ENCODE measurements at regions of chr17 and their contacts with region 1.

Region 1: GRCh38 chr17:31321481-31321880 is at the start of gene EVI2A:
- DNase-seq: peak; percentile 69
- ATAC-seq: peak; percentile 74
- H3K4me3 ChIP-seq: peak within 1 kb of the TSS; percentile 65
- H3K27ac ChIP-seq: peak within 1 kb of the TSS; percentile 95
- H3K4me1 ChIP-seq: peaks cover 4% of the 10 kb centered on the region; the same call in 1 of the 2 replicates
- H3K27me3 ChIP-seq: no peaks in the 10 kb centered on the region
- CTCF ChIP-seq: no peak
- EP300 ChIP-seq: peak in 1 of 2 experiments; percentile 31; a peak in 1 of 4 replicates
- POLR2A ChIP-seq: no peak
- RAD21 ChIP-seq: no peak
- polyA plus RNA-seq, gene EVI2A: 54.5 to 78.3 TPM

Region 2: DNA sequence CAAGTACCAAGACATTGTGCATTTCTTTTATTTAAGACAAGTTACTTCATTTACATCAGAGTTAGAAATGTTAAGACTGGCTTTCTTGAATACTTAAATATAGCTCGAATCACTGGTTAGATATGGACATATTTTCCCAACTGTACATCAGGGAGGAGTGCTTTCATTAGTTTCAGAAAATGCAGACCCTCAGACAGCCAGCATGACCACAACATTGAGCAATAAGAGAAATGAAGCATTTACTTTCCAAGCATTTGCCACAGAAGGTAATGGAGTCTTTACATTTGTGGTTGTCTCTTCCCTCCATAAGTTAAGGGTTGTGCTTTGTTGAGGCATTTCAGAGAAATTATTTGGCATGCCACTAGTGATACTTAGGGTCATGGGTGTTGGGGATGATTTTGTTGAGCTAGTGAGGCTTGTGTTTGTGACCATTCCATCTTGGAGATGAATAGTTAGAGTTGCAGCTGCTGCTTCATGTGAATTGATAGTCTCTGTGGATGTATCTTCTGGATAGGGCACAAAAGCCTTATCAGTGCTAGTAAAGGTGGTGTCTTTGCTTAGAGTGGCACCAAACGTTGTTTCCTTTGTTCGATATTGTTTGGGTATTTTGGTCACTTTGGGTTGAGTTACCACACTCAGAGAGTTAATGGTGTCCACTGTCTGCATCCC is 26.5 kb before region 1 on chr17:
- CTCF ChIA-PET with region 1: no interaction called
- POLR2A ChIA-PET with region 1: no interaction called
- RAD21 ChIA-PET with region 1: no interaction called
- SMC1A ChIA-PET with region 1: no interaction called
- in situ Hi-C with region 1: no loop called
- intact Hi-C with region 1: no loop called
- DNase-seq: no peak
- ATAC-seq: no peak
- H3K4me3 ChIP-seq: no peak overlapping the region
- H3K27ac ChIP-seq: no peak overlapping the region
- H3K4me1 ChIP-seq: no peaks in the 10 kb centered on the region
- H3K27me3 ChIP-seq: no peaks in the 10 kb centered on the region
- CTCF ChIP-seq: no peak
- EP300 ChIP-seq: no peak
- POLR2A ChIP-seq: no peak
- RAD21 ChIP-seq: no peak

Region 3: DNA sequence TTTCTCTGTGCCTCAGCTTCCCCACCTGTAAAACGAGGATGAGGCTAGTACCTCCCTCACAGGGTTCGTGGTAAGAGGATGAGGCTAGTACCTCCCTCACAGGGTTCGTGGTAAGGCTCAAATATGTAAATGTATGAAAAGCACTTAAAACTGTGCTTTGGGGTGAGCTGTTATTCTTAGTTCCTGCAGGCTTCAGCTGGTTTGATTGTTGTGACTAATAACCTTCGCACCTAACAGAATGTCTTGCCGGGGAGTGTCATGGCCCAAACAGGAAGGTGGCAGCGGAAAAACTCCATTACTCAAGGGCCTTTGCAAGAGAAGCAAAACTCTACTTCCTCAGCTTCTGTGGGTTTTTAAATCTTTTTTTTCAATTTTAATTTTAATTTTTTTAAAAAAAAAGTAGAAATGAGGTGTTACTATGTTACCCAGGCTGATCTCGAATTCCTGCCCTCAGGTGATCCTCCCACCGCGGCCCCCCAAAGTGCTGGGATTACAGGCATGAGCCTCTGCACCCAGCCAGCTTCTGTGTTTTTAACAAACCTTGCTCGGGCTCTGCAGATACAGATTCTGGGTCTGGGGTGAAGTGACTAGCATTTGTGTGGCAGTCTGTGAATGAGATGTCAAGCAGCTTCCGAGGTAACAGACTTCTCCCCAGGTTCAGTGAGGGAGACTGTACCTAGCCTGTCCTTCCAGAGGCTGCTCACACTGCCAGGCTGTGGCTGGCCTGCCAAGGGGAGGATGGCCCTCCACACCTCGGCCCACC is 173.0 kb after region 1 on chr17:
- CTCF ChIA-PET with region 1: no interaction called
- POLR2A ChIA-PET with region 1: interaction called, 18 read pairs
- RAD21 ChIA-PET with region 1: no interaction called
- SMC1A ChIA-PET with region 1: interaction called, 11 read pairs
- in situ Hi-C with region 1: no loop called
- intact Hi-C with region 1: no loop called
- DNase-seq: peak; percentile 83
- ATAC-seq: peak; percentile 69
- H3K4me3 ChIP-seq: peak overlapping the region; percentile 56; the same call in 1 of the 2 replicates
- H3K27ac ChIP-seq: peak overlapping the region; percentile 92
- H3K4me1 ChIP-seq: peaks cover 65% of the 10 kb centered on the region
- H3K27me3 ChIP-seq: no peaks in the 10 kb centered on the region
- CTCF ChIP-seq: no peak
- EP300 ChIP-seq: peak; percentile 58 to 67; a peak in 3 of 4 replicates
- POLR2A ChIP-seq: peak; percentile 40; the same call in 1 of the 2 replicates
- RAD21 ChIP-seq: no peak

Region 4: GRCh38 chr17:31907342-31907962 is 586.0 kb after region 1 on chr17:
- CTCF ChIA-PET with region 1: no interaction called
- POLR2A ChIA-PET with region 1: no interaction called
- RAD21 ChIA-PET with region 1: no interaction called
- SMC1A ChIA-PET with region 1: no interaction called
- in situ Hi-C with region 1: no loop called
- intact Hi-C with region 1: loop called (anchors 10 kb)
- DNase-seq: no peak
- ATAC-seq: no peak
- H3K4me3 ChIP-seq: no peak overlapping the region
- H3K27ac ChIP-seq: no peak overlapping the region
- H3K4me1 ChIP-seq: peaks cover 2% of the 10 kb centered on the region
- H3K27me3 ChIP-seq: peaks cover 0 to 3% of the 10 kb centered on the region in 2 experiments; a peak in 1 of 4 replicates
- CTCF ChIP-seq: no peak
- EP300 ChIP-seq: no peak
- POLR2A ChIP-seq: no peak
- RAD21 ChIP-seq: no peak

Measured in GM12878 (cell line).